IMR-90 (cell line): ENCODE measurements at regions of chr12 and their contacts with region 1.

Region 1: GRCh38 chr12:80472902-80473500 is 29.0 kb downstream of the PTPRQ start:
- DNase-seq: peak; percentile 81
- ATAC-seq: peak; percentile 87
- H3K4me3 ChIP-seq: no peak overlapping the region
- H3K27ac ChIP-seq: peak overlapping the region; percentile 71; the same call in 1 of the 2 replicates
- H3K4me1 ChIP-seq: peaks cover 2% of the 10 kb centered on the region; the same call in 1 of the 2 replicates
- H3K27me3 ChIP-seq: no peaks in the 10 kb centered on the region
- CTCF ChIP-seq: peak; percentile 65
- POLR2A ChIP-seq: no peak
- RAD21 ChIP-seq: peak; percentile 69

Region 2: GRCh38 chr12:79420146-79420618 is 1052.8 kb before region 1 on chr12:
- CTCF ChIA-PET with region 1: no interaction called
- POLR2A ChIA-PET with region 1: no interaction called
- dilution Hi-C with region 1: no loop called
- in situ Hi-C with region 1: no loop called
- intact Hi-C with region 1: no loop called
- DNase-seq: peak; percentile 95
- ATAC-seq: peak; percentile 66
- H3K4me3 ChIP-seq: no peak overlapping the region
- H3K27ac ChIP-seq: peak overlapping the region; percentile 72
- H3K4me1 ChIP-seq: peaks cover 24% of the 10 kb centered on the region
- H3K27me3 ChIP-seq: no peaks in the 10 kb centered on the region
- CTCF ChIP-seq: peak; percentile 79
- POLR2A ChIP-seq: no peak
- RAD21 ChIP-seq: peak; percentile 80

Region 3: GRCh38 chr12:80412369-80412953 is 60.5 kb before region 1 on chr12:
- CTCF ChIA-PET with region 1: no interaction called
- POLR2A ChIA-PET with region 1: no interaction called
- dilution Hi-C with region 1: no loop called
- in situ Hi-C with region 1: no loop called
- intact Hi-C with region 1: loop called (anchors 1 kb)
- DNase-seq: peak; percentile 69
- ATAC-seq: peak; percentile 81
- H3K4me3 ChIP-seq: no peak overlapping the region
- H3K27ac ChIP-seq: no peak overlapping the region
- H3K4me1 ChIP-seq: no peaks in the 10 kb centered on the region
- H3K27me3 ChIP-seq: no peaks in the 10 kb centered on the region
- CTCF ChIP-seq: peak; percentile 87
- POLR2A ChIP-seq: no peak
- RAD21 ChIP-seq: peak; percentile 94

Region 4: GRCh38 chr12:80445083-80445793 is 27.8 kb before region 1 on chr12:
- CTCF ChIA-PET with region 1: no interaction called
- POLR2A ChIA-PET with region 1: no interaction called
- dilution Hi-C with region 1: no loop called
- in situ Hi-C with region 1: no loop called
- intact Hi-C with region 1: no loop called
- DNase-seq: peak; percentile 54
- ATAC-seq: peak; percentile 87
- H3K4me3 ChIP-seq: no peak overlapping the region
- H3K27ac ChIP-seq: peak overlapping the region; percentile 67; the same call in 1 of the 2 replicates
- H3K4me1 ChIP-seq: peaks cover 4% of the 10 kb centered on the region
- H3K27me3 ChIP-seq: no peaks in the 10 kb centered on the region
- CTCF ChIP-seq: no peak
- POLR2A ChIP-seq: no peak
- RAD21 ChIP-seq: no peak

Region 5: DNA sequence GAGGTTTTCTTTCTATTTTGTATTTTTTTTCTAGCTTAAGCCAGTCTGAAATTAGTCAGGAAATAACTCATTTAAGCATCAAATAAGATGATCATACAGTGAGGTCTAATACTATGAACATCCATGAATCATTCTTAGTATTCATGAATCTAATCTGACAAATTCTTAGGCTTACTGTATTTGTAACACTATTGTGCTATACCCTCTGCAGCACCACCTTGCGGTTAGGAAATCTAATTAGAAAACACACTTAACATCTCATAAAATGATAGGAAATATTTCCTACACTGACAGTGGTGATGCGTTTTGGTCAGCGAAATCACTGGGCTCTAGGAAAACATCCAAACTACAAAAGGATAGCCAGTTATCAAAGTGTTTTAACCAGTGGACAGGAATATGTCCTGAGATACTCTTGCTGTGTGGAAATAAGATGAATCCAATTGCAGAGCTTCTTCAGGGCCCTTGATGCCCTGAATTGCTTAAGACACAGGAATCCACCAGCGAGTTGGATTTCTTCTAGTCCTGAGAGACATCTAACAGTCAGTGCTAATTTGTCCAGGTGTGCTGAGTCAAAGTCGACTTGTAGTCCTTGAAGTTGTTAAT is 125.1 kb after region 1 on chr12:
- CTCF ChIA-PET with region 1: interaction called, 3 read pairs
- POLR2A ChIA-PET with region 1: no interaction called
- dilution Hi-C with region 1: no loop called
- in situ Hi-C with region 1: no loop called
- intact Hi-C with region 1: loop called (anchors 1 kb)
- DNase-seq: peak; percentile 83
- ATAC-seq: peak; percentile 67
- H3K4me3 ChIP-seq: no peak overlapping the region
- H3K27ac ChIP-seq: no peak overlapping the region
- H3K4me1 ChIP-seq: peaks cover 11% of the 10 kb centered on the region; the same call in 1 of the 2 replicates
- H3K27me3 ChIP-seq: no peaks in the 10 kb centered on the region
- CTCF ChIP-seq: peak; percentile 63
- POLR2A ChIP-seq: no peak
- RAD21 ChIP-seq: peak; percentile 62

Region 6: DNA sequence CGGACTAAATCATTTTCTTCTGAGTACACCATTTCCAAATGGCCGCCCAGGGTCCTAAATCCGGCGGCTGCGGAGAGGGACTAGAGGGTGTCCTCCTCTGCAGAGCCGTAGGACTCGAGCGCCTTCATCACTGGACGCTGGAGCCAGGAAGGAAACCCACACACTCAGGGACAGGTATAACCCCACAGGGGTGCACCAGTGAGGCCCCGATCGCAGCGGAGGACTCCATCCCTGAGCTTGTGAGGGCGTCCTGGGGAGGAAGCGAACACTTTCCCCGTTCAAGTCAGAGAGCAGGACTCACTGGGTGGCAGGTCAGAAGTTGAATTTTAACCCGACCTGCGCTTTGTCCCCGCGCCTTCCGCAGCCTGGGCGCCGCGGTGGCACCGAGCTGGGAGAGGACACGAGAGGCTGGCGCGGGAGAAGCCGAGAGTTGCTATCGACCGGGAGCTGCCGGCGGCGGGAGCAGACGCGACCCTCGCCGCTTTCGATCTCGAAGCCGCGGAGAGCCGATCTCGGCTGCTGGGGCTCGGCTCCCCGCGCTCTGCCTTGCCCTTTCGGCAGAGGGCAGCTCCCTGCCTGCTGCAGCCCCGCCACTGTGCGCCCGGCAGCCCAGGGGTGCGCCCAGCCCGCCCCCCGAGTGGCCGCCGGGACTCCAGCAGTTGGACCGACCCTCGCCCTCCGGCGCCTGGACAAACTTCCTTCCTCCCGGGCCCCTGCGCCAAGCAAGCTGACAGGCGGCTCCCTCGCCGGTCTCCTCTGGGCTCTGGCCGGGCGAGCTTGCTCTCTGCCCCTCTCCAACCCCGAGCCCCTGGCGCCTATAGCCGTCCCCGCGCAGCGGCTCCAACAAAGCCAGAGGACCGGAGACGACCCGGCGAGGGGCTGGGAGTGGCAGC is 463.7 kb after region 1 on chr12:
- CTCF ChIA-PET with region 1: no interaction called
- POLR2A ChIA-PET with region 1: no interaction called
- dilution Hi-C with region 1: no loop called
- in situ Hi-C with region 1: no loop called
- intact Hi-C with region 1: loop called (anchors 5 kb)
- DNase-seq: peak; percentile 42
- ATAC-seq: peak; percentile 81
- H3K4me3 ChIP-seq: peak overlapping the region; percentile 98
- H3K27ac ChIP-seq: peak overlapping the region; percentile 74
- H3K4me1 ChIP-seq: no peaks in the 10 kb centered on the region
- H3K27me3 ChIP-seq: no peaks in the 10 kb centered on the region
- CTCF ChIP-seq: no peak
- POLR2A ChIP-seq: no peak
- RAD21 ChIP-seq: no peak